ENCODE measurements at regions of chr20 and their contacts with region 1.

Region 1: DNA sequence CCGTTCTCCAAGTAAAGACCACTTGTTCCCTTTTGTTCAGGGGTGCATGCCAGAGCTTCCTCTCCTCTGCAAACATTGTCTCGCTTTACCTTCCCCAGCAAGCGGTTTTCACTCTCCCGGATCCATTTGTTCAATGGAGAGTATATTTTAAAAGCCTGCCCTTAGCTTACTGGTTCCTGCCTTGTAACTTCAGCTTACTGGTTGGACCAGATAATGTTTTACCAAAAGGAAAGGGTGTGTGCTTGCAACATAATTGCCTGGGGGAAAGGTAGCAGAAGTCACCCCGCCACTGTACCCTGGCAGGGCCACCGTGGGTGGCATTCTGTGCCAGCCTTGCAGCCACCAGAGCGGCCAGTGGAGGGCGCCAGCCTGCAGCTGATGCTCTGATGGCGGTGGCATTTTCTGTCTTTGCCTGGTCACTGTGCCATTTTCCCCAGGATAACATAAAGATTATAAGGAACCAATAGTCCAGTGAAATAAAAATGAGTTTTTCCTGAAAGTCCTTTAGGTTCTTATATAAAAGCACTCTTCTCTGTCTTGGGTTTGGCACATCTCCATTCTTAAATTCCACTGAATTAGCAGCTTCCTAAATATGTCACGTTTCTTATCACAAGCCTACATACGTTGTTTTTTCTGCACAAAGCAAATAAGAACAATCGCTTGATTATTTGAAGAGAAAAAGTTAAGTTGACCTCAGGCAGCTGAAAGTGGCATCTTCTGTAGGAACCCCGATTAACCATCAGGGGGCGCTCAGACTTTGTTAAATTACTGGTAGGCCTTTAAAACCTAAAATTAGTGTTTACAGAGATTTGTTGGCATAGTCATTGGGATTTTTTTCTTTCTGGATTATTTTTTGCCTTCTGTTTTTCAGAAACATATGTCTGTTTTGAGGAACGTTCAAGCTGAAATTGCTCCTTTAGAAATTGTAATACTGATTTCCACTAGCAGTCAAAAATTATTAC is 67.4 kb upstream of the XRN2 start:
- DNase-seq: peak; percentile 77
- ATAC-seq: peak; percentile 88
- H3K4me3 ChIP-seq: no peak overlapping the region
- H3K27ac ChIP-seq: no peak overlapping the region
- H3K4me1 ChIP-seq: peaks cover 6% of the 10 kb centered on the region; the same call in 1 of the 2 replicates
- H3K27me3 ChIP-seq: no peaks in the 10 kb centered on the region
- CTCF ChIP-seq: peak; percentile 91
- EP300 ChIP-seq: no peak
- POLR2A ChIP-seq: no peak
- RAD21 ChIP-seq: peak; percentile 79

Region 2: GRCh38 chr20:20837574-20838021 is 398.2 kb before region 1 on chr20:
- CTCF ChIA-PET with region 1: interaction called, 7 read pairs
- POLR2A ChIA-PET with region 1: no interaction called
- in situ Hi-C with region 1: no loop called
- intact Hi-C with region 1: loop called (anchors 1 kb)
- DNase-seq: peak; percentile 60
- ATAC-seq: peak; percentile 89
- H3K4me3 ChIP-seq: peak overlapping the region in 2 of 3 experiments; percentile 18 to 57; a peak in 3 of 6 replicates
- H3K27ac ChIP-seq: no peak overlapping the region
- H3K4me1 ChIP-seq: peaks cover 7% of the 10 kb centered on the region
- H3K27me3 ChIP-seq: peaks cover 5 to 17% of the 10 kb centered on the region in 2 experiments; a peak in 4 of 5 replicates
- CTCF ChIP-seq: peak; percentile 91
- EP300 ChIP-seq: no peak
- POLR2A ChIP-seq: no peak
- RAD21 ChIP-seq: peak; percentile 83

Region 3: GRCh38 chr20:21357844-21358243 is 122.1 kb after region 1 on chr20:
- CTCF ChIA-PET with region 1: interaction called, 3 read pairs
- POLR2A ChIA-PET with region 1: no interaction called
- in situ Hi-C with region 1: no loop called
- intact Hi-C with region 1: loop called (anchors 5 kb)
- DNase-seq: peak; percentile 93
- ATAC-seq: peak; percentile 99
- H3K4me3 ChIP-seq: no peak overlapping the region; a peak in 1 of 6 replicates
- H3K27ac ChIP-seq: peak overlapping the region; percentile 88
- H3K4me1 ChIP-seq: peaks cover 47% of the 10 kb centered on the region
- H3K27me3 ChIP-seq: no peaks in the 10 kb centered on the region
- CTCF ChIP-seq: no peak
- EP300 ChIP-seq: peak in 1 of 2 experiments; percentile 58; a peak in 1 of 4 replicates
- POLR2A ChIP-seq: no peak
- RAD21 ChIP-seq: no peak

Region 4: GRCh38 chr20:21490095-21490494 is 254.3 kb after region 1 on chr20:
- CTCF ChIA-PET with region 1: interaction called, 18 read pairs
- POLR2A ChIA-PET with region 1: no interaction called
- in situ Hi-C with region 1: no loop called
- intact Hi-C with region 1: no loop called
- DNase-seq: no peak
- ATAC-seq: no peak
- H3K4me3 ChIP-seq: no peak overlapping the region
- H3K27ac ChIP-seq: no peak overlapping the region
- H3K4me1 ChIP-seq: no peaks in the 10 kb centered on the region
- H3K27me3 ChIP-seq: 0 out of 5 replicates have a peak, but pooled peaks cover 2 to 12% of the 10 kb centered on the region in 2 experiments
- CTCF ChIP-seq: peak; percentile 16; the same call in 1 of the 2 replicates
- EP300 ChIP-seq: no peak
- POLR2A ChIP-seq: no peak
- RAD21 ChIP-seq: no peak; the same call in 1 of the 2 replicates

Region 5: GRCh38 chr20:21571841-21572690 is 336.3 kb after region 1 on chr20:
- CTCF ChIA-PET with region 1: interaction called, 10 read pairs
- POLR2A ChIA-PET with region 1: no interaction called
- in situ Hi-C with region 1: no loop called
- intact Hi-C with region 1: loop called (anchors 1 kb)
- DNase-seq: peak; percentile 23
- ATAC-seq: peak; percentile 48
- H3K4me3 ChIP-seq: no peak overlapping the region
- H3K27ac ChIP-seq: no peak overlapping the region
- H3K4me1 ChIP-seq: no peaks in the 10 kb centered on the region
- H3K27me3 ChIP-seq: peaks cover 4 to 37% of the 10 kb centered on the region in 2 experiments; a peak in 3 of 5 replicates
- CTCF ChIP-seq: peak; percentile 86
- EP300 ChIP-seq: no peak
- POLR2A ChIP-seq: no peak
- RAD21 ChIP-seq: peak; percentile 79